ENCODE measurements at regions of chr10 and their contacts with region 1.

Region 1: DNA sequence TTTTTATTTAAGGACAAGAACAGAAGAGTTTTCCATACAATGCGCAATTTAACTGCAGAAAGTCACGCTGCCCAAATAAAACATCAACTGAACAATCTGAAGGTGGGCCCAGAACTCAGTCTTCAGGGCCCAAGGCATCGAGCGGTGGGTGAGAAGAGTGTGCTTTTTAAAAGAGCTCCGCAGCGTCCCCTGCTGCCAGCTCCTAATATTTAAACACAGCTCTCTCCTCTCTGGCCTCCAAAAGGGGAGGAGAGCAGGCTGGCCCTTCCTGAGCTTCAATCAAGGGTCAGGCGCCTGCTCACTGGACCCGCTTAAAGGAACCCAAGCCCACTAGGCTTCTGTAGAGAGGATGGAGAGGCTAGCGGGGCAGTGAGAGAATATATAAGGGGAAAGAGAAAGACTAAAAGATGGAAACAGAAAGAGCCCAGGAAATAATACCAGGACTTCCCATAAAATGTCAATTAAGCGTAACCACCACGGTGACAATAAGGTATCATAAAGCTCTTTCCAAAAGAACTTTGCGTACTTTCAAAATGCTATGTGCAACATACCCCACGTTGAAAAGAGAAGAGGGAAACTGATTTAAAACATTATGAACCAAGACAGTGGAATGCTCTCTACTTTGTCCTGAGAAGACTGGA is 2.8 kb downstream of the FAM53B start:
- DNase-seq: peak; percentile 92 to 93
- ATAC-seq: peak; percentile 84
- H3K4me3 ChIP-seq: no peak overlapping the region
- H3K27ac ChIP-seq: no peak overlapping the region
- H3K4me1 ChIP-seq: peaks cover 0 to 2% of the 10 kb centered on the region in 2 donors
- H3K27me3 ChIP-seq: no peaks in the 10 kb centered on the region

Region 2: GRCh38 chr10:124530215-124530665 is 211.2 kb before region 1 on chr10:
- intact Hi-C with region 1: loop called in 1 of 2 experiments (anchors 5 kb)
- DNase-seq: peak; percentile 91 to 95
- ATAC-seq: peak; percentile 87
- H3K4me3 ChIP-seq: no peak overlapping the region
- H3K27ac ChIP-seq: no peak overlapping the region
- H3K4me1 ChIP-seq: no peaks in the 10 kb centered on the region
- H3K27me3 ChIP-seq: no peaks in the 10 kb centered on the region

Region 3: DNA sequence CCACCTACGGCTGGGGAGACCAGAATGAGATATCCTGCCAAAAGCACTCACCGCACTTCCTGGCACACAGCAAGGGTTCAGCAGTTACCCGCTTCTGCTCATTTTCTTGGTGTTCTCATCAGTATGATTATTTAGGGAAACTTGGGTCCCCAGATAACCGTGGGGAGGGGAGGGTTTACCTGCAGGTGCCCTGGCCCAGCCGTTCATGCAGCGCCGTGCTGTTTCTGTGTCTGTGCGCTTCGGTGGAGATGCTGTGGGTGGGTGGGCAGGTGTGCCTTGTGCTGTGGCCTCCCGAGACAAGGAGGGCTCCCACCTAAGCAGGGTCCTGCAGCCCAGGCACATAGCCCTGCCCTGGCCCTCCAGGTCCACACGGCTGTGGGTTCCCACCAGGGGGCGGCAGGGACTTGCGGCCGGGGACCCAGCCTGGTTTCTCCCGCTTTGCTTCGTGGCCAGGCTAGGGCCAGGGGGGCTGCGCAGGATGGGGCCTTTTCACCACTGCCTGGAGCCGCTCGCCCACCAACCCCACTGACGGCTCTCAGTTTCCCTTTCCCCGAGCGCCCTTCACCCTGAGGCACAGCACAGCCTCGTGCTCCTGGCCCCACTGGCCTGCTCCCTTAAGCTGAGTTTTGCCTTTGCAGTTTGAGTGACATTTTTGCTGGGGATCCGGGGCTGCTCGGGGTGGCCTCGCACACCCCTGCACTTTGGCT is 201.3 kb before region 1 on chr10:
- intact Hi-C with region 1: loop called in 1 of 2 experiments (anchors 2 kb)
- DNase-seq: peak; percentile 81 to 92
- ATAC-seq: peak; percentile 70
- H3K4me3 ChIP-seq: no peak overlapping the region
- H3K27ac ChIP-seq: no peak overlapping the region
- H3K4me1 ChIP-seq: no peaks in the 10 kb centered on the region
- H3K27me3 ChIP-seq: no peaks in the 10 kb centered on the region

Region 4: GRCh38 chr10:124632064-124632531 is 109.3 kb before region 1 on chr10:
- intact Hi-C with region 1: loop called in 1 of 2 experiments (anchors 5 kb)
- DNase-seq: peak in 1 of 2 donors; percentile 87
- ATAC-seq: peak; percentile 6
- H3K4me3 ChIP-seq: no peak overlapping the region
- H3K27ac ChIP-seq: no peak overlapping the region
- H3K4me1 ChIP-seq: no peaks in the 10 kb centered on the region
- H3K27me3 ChIP-seq: no peaks in the 10 kb centered on the region

Region 5: DNA sequence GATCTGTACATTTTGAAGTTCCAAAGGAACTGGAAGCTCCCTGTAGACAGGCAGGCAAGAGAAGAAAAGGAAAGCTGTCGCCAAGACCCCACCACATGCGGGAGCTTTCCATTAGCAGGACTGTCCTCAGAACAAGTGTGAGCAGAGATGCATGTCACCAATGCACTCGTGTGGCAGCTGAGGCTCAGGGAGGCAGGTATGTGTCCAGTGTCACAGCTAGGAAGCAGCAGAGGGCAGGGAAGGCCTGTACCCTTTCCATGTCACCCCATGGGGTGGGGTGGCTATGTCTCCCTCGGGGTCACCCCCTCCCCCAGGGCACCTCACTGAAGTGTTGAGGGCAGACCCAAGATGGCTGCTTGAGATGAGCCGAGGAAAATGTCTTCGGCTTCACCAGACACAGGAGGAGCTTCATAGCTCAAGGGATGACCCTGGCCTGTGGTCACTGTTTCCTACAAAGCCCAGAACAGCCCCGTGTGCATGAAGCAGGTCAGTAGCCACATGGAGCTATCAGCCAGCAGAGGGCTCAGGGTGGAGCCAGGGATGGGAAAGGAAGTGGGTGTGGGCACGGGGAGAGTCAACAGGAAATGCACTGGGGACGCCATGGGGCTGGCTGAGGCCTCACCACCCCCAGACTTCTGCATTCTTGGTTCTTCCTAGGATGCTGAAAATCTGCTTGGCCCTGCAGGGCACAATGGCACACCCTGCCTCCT is 93.8 kb before region 1 on chr10:
- intact Hi-C with region 1: loop called (anchors 5 kb)
- DNase-seq: peak in 1 of 2 donors; percentile 91
- ATAC-seq: peak; percentile 45
- H3K4me3 ChIP-seq: no peak overlapping the region
- H3K27ac ChIP-seq: no peak overlapping the region
- H3K4me1 ChIP-seq: no peaks in the 10 kb centered on the region
- H3K27me3 ChIP-seq: no peaks in the 10 kb centered on the region

Region 6: GRCh38 chr10:124955243-124955642 is 213.8 kb after region 1 on chr10:
- intact Hi-C with region 1: no loop called
- DNase-seq: no peak
- ATAC-seq: no peak
- H3K4me3 ChIP-seq: no peak overlapping the region
- H3K27ac ChIP-seq: no peak overlapping the region
- H3K4me1 ChIP-seq: peaks cover 0 to 2% of the 10 kb centered on the region in 2 donors
- H3K27me3 ChIP-seq: no peaks in the 10 kb centered on the region

Measured in aorta (tissue), 5 donors.